ENCODE measurements at regions of chr9 and their contacts with region 1.

Region 1: DNA sequence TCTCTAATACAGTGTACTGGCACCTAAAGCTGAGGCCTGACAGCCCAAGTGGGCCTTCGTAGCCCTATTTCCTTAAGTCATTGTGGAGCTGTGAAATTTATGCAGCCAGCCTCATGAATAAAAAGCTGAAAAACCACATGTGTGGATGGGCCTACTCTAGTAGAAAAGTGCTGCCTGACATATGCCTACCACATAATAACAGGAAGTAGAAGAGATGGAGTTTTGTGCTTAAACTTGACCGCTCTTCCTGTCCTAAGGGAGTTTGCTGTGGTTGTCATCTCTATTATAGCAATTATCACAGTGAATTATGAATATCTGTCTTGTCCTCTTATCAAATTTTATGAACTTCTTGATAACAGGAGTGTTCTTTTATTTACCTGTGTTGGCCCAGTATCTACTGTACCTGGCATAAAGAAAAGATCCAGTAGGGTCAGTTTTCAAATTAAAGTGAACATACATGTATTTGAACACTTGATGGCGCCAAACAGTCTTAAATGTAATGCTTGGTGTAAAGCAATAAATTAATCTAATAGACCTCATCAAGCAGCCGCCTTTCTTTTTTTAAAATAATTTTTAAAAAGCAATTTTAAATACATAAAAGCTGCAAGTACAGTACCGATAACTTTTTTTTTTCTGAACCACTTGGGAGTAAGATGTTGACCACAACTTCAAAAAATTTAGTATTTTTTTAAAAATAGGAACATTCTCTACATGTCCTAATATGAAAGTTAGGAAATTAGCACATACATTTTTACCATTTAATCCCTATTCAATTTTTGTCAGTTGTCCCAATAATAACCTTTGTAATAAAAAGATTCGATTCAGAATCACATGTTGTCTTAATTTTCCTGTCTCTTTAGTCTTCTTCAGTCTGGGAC is 51.0 kb downstream of the FKTN start:
- DNase-seq: peak in 3 of 14 experiments; percentile 53 to 58 (median 55)
- ATAC-seq: no peak
- H3K4me3 ChIP-seq: no peak overlapping the region
- H3K4me3 Mint-ChIP-seq: no peak overlapping the region
- H3K27ac ChIP-seq: no peak overlapping the region
- H3K27ac Mint-ChIP-seq: no peak overlapping the region
- H3K4me1 ChIP-seq: no peaks in the 10 kb centered on the region
- H3K4me1 Mint-ChIP-seq: no peaks in the 10 kb centered on the region
- H3K27me3 ChIP-seq: no peaks in the 10 kb centered on the region
- H3K27me3 Mint-ChIP-seq: no peaks in the 10 kb centered on the region
- CTCF ChIP-seq: peak; percentile 73

Region 2: GRCh38 chr9:105557771-105558610 is 51.0 kb before region 1 on chr9 and contains the start of gene FKTN:
- CTCF ChIA-PET with region 1: no interaction called
- POLR2A ChIA-PET with region 1: no interaction called
- intact Hi-C with region 1: loop called in 1 of 2 experiments (anchors 10 kb)
- DNase-seq: peak; percentile 56 to 87 (median 72)
- ATAC-seq: peak; percentile 96
- H3K4me3 ChIP-seq: peak within 1 kb of the TSS; percentile 94
- H3K4me3 Mint-ChIP-seq: peak within 1 kb of the TSS; percentile 93
- H3K27ac ChIP-seq: peak within 1 kb of the TSS; percentile 30 to 47
- H3K27ac Mint-ChIP-seq: peak within 1 kb of the TSS; percentile 83
- H3K4me1 ChIP-seq: peaks cover 12% of the 10 kb centered on the region
- H3K4me1 Mint-ChIP-seq: peaks cover 19% of the 10 kb centered on the region
- H3K27me3 ChIP-seq: no peaks in the 10 kb centered on the region
- H3K27me3 Mint-ChIP-seq: no peaks in the 10 kb centered on the region
- CTCF ChIP-seq: no peak
- total RNA-seq, gene FKTN: 5.7 to 5.8 TPM

Region 3: DNA sequence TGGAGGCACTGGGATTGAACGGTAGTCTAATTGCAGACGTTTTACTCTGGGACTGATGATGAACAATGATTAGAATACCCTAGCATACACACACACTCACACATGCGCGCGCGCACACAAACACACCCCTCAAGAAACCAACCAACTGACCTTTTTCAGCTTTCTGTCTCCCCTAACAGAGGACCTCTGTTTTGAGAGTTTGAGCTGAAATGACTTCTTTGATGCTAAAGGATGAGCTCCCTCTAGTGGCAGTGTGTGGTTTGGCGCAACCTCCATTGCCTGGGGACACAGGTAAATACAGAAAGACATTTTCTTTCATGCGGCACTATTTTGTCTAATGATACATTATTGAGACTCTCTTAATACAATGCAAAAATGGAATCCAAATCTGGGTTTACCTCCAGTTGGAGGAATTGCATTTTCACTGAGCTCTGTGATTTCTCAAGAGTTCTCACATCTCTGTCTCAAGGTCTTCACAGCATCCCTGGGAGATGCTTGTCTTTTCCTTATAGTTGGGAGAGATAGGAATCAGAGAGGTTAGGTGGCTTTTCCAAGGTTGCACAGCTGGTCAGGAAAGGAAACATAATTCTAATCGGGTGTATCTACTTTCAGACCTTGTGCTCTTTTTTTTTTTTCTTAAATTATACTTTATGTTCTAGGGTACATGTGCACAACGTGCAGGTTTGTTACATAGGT is 272.8 kb after region 1 on chr9:
- CTCF ChIA-PET with region 1: no interaction called
- POLR2A ChIA-PET with region 1: no interaction called
- intact Hi-C with region 1: loop called (anchors 1 to 5 kb)
- DNase-seq: peak; percentile 29 to 72 (median 52)
- ATAC-seq: peak; percentile 48
- H3K4me3 ChIP-seq: no peak overlapping the region
- H3K4me3 Mint-ChIP-seq: no peak overlapping the region
- H3K27ac ChIP-seq: no peak overlapping the region
- H3K27ac Mint-ChIP-seq: no peak overlapping the region
- H3K4me1 ChIP-seq: no peaks in the 10 kb centered on the region
- H3K4me1 Mint-ChIP-seq: no peaks in the 10 kb centered on the region
- H3K27me3 ChIP-seq: no peaks in the 10 kb centered on the region
- H3K27me3 Mint-ChIP-seq: peaks cover 5% of the 10 kb centered on the region
- CTCF ChIP-seq: peak; percentile 89

Region 4: GRCh38 chr9:107172160-107172978 is 1563.4 kb after region 1 on chr9:
- CTCF ChIA-PET with region 1: no interaction called
- POLR2A ChIA-PET with region 1: no interaction called
- intact Hi-C with region 1: loop called in 1 of 2 experiments (anchors 10 kb)
- DNase-seq: peak; percentile 15 to 68 (median 38)
- ATAC-seq: peak; percentile 59
- H3K4me3 ChIP-seq: no peak overlapping the region
- H3K4me3 Mint-ChIP-seq: no peak overlapping the region
- H3K27ac ChIP-seq: no peak overlapping the region
- H3K27ac Mint-ChIP-seq: no peak overlapping the region
- H3K4me1 ChIP-seq: no peaks in the 10 kb centered on the region
- H3K4me1 Mint-ChIP-seq: no peaks in the 10 kb centered on the region
- H3K27me3 ChIP-seq: no peaks in the 10 kb centered on the region
- H3K27me3 Mint-ChIP-seq: peaks cover 8% of the 10 kb centered on the region
- CTCF ChIP-seq: peak; percentile 76

Measured in CD4-positive, alpha-beta T cell (primary cell).